Ovary (tissue), 10 donors: ENCODE measurements at regions of chr3 and their contacts with region 1.

Region 1: GRCh38 chr3:55059027-55059629 is 131.3 kb upstream of the LRTM1 start:
- DNase-seq: no peak
- H3K4me3 ChIP-seq: no peak overlapping the region
- H3K27ac ChIP-seq: no peak overlapping the region
- H3K4me1 ChIP-seq: no peaks in the 10 kb centered on the region
- H3K27me3 ChIP-seq: no peaks in the 10 kb centered on the region
- CTCF ChIP-seq: no peak
- EP300 ChIP-seq: no peak
- POLR2A ChIP-seq: no peak

Region 2: DNA sequence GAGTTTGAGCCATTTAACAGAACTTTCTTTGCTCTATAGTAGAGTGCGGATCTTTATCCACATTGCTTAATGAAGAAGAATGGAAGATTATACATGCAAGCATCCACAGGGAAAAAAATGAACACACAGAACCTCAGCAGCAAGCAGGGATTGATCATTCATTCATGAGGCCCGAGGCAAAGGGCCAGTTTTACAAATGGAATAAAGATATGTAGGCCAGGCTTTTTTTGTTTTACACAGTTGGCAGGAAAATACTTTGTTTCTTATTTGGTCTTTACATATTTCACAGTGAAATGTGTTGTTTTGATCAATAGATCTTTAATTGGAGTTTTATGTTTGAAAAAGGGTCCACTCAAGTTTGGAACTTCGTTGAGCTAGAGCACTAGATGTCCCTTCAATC is 248.7 kb before region 1 on chr3:
- intact Hi-C with region 1: no loop called
- DNase-seq: no peak
- H3K4me3 ChIP-seq: no peak overlapping the region
- H3K27ac ChIP-seq: no peak overlapping the region
- H3K4me1 ChIP-seq: no peaks in the 10 kb centered on the region
- H3K27me3 ChIP-seq: no peaks in the 10 kb centered on the region
- CTCF ChIP-seq: no peak
- EP300 ChIP-seq: no peak
- POLR2A ChIP-seq: no peak

Region 3: GRCh38 chr3:55105647-55106046 is 46.5 kb after region 1 on chr3:
- intact Hi-C with region 1: loop called in 1 of 4 experiments (anchors 10 kb)
- DNase-seq: no peak
- H3K4me3 ChIP-seq: no peak overlapping the region
- H3K27ac ChIP-seq: no peak overlapping the region
- H3K4me1 ChIP-seq: no peaks in the 10 kb centered on the region
- H3K27me3 ChIP-seq: no peaks in the 10 kb centered on the region
- CTCF ChIP-seq: no peak
- EP300 ChIP-seq: no peak
- POLR2A ChIP-seq: no peak